ENCODE measurements at regions of chr5 and their contacts with region 1.

Region 1: GRCh38 chr5:43523662-43524072 is 8.7 kb upstream of the C5orf34 start:
- DNase-seq: no peak
- ATAC-seq: no peak
- H3K4me3 Mint-ChIP-seq: no peak overlapping the region
- H3K27ac Mint-ChIP-seq: no peak overlapping the region
- H3K4me1 Mint-ChIP-seq: peaks cover 2% of the 10 kb centered on the region
- H3K27me3 Mint-ChIP-seq: no peaks in the 10 kb centered on the region

Region 2: GRCh38 chr5:42636425-42636824 is 887.2 kb before region 1 on chr5:
- CTCF ChIA-PET with region 1: no interaction called
- POLR2A ChIA-PET with region 1: no interaction called
- intact Hi-C with region 1: no loop called
- DNase-seq: no peak
- ATAC-seq: no peak
- H3K4me3 Mint-ChIP-seq: no peak overlapping the region
- H3K27ac Mint-ChIP-seq: no peak overlapping the region
- H3K4me1 Mint-ChIP-seq: no peaks in the 10 kb centered on the region
- H3K27me3 Mint-ChIP-seq: peaks cover 3% of the 10 kb centered on the region

Region 3: GRCh38 chr5:43543434-43543833 is 19.8 kb after region 1 on chr5:
- CTCF ChIA-PET with region 1: interaction called, 3 read pairs
- POLR2A ChIA-PET with region 1: no interaction called
- intact Hi-C with region 1: loop called in 1 of 2 experiments (anchors 2 kb)
- DNase-seq: no peak
- ATAC-seq: no peak
- H3K4me3 Mint-ChIP-seq: no peak overlapping the region
- H3K27ac Mint-ChIP-seq: no peak overlapping the region
- H3K4me1 Mint-ChIP-seq: peaks cover 15% of the 10 kb centered on the region
- H3K27me3 Mint-ChIP-seq: no peaks in the 10 kb centered on the region

Region 4: DNA sequence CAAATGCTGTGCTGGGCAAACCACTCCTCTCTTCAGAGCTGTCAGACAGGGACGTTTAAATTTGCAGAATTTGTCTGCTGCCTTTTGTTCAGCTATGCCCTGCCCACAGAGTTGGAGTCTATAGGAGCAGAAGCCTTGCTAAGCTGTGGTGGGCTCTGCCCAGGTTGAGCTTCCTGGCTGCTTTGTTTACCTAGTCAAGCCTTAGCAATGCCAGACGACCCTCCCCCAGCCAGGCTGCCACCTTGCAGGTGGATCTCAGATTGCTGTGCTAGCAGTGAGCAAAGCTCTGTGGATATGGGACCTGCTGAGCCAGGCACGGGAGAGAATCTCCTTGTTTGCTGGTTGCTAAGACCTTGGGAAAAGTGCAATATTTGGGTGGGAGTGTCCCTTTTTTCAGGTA is 394.3 kb after region 1 on chr5:
- CTCF ChIA-PET with region 1: no interaction called
- POLR2A ChIA-PET with region 1: no interaction called
- intact Hi-C with region 1: no loop called
- DNase-seq: no peak
- ATAC-seq: no peak
- H3K4me3 Mint-ChIP-seq: no peak overlapping the region
- H3K27ac Mint-ChIP-seq: no peak overlapping the region
- H3K4me1 Mint-ChIP-seq: no peaks in the 10 kb centered on the region
- H3K27me3 Mint-ChIP-seq: no peaks in the 10 kb centered on the region